Heart right ventricle (tissue), 16 donors: ENCODE measurements at regions of chr4 and their contacts with region 1.

Region 1: GRCh38 chr4:41092128-41092527 is 122.2 kb downstream of the APBB2 start:
- DNase-seq: no peak
- ATAC-seq: no peak
- H3K4me3 ChIP-seq: no peak overlapping the region
- H3K27ac ChIP-seq: no peak overlapping the region
- H3K4me1 ChIP-seq: peaks cover 0 to 32% (median 0%) of the 10 kb centered on the region in 9 donors
- H3K27me3 ChIP-seq: no peaks in the 10 kb centered on the region
- CTCF ChIP-seq: no peak

Region 2: DNA sequence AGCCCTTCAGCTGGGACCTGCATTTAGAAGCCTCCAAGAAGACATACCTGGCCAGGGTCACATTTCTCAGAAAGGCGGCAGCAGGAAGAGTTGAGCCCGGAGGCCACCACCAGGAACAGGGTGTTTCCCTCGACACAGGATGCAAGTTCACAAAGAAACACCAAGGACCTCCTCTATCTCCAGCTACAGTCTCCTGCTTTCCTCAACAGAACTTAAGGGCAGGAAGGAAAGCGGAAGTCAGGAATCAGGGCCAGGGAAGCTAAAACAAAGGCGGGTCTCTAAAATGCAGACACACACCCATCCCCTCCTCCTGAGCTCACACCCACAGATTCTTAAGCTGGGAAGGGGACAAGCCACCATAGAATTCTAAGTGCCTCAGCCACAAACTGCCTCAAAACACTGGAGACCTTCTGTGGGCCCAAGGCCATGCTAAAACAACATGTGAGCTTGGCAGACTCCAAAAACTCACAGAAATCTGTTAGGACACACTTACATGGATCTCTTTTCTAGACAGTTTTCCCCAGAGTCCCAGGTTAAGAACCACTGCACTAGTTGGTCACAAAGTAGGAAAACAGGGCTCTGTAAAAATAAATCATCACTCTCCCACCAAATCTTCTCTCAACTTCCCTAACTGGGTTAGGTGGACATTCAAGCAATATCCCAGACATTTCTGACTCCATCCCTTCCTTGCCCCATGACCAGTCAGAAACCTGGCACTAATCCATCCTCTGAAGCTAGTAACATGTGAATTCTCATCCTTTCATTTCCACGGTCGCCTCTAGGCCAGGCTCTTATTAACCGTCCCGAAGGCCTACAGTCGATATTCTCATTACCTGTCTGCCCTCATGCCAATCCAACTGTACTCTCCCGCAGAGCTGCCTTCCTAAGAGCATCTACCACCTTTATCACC is 41.0 kb before region 1 on chr4:
- intact Hi-C with region 1: loop called in 1 of 10 experiments (anchors 5 kb)
- DNase-seq: peak in 1 of 2 donors; percentile 57
- ATAC-seq: peak; percentile 56 to 92 (median 87)
- H3K4me3 ChIP-seq: peak overlapping the region in 7 of 10 donors; percentile 3 to 49 (median 38)
- H3K27ac ChIP-seq: peak overlapping the region; percentile 64 to 94 (median 78)
- H3K4me1 ChIP-seq: peaks cover 4 to 62% (median 17%) of the 10 kb centered on the region in 9 donors
- H3K27me3 ChIP-seq: no peaks in the 10 kb centered on the region
- CTCF ChIP-seq: no peak

Region 3: GRCh38 chr4:41204400-41204978 is 112.4 kb after region 1 on chr4:
- intact Hi-C with region 1: no loop called
- DNase-seq: peak; percentile 46 to 66
- ATAC-seq: peak; percentile 46 to 89 (median 69)
- H3K4me3 ChIP-seq: peak overlapping the region in 1 of 10 donors; percentile 2
- H3K27ac ChIP-seq: peak overlapping the region in 8 of 10 donors; percentile 15 to 76 (median 60)
- H3K4me1 ChIP-seq: peaks cover 0 to 100% (median 70%) of the 10 kb centered on the region in 9 donors
- H3K27me3 ChIP-seq: no peaks in the 10 kb centered on the region
- CTCF ChIP-seq: no peak